ENCODE measurements at regions of chr19 and their contacts with region 1.

Region 1: GRCh38 chr19:18612772-18613588 is at the start of gene TMEM59L:
- DNase-seq: peak; percentile 56
- H3K4me3 Mint-ChIP-seq: peak within 1 kb of the TSS; percentile 61
- H3K27ac Mint-ChIP-seq: no peak within 1 kb of the TSS
- H3K4me1 Mint-ChIP-seq: peaks cover 17% of the 10 kb centered on the region
- H3K27me3 Mint-ChIP-seq: peaks cover 62% of the 10 kb centered on the region
- total RNA-seq, gene TMEM59L: 0.21 to 0.40 TPM

Region 2: GRCh38 chr19:18785179-18786128 is 172.5 kb after region 1 on chr19:
- CTCF ChIA-PET with region 1: no interaction called
- intact Hi-C with region 1: loop called (anchors 10 kb)
- DNase-seq: peak; percentile 79
- H3K4me3 Mint-ChIP-seq: no peak overlapping the region
- H3K27ac Mint-ChIP-seq: no peak overlapping the region
- H3K4me1 Mint-ChIP-seq: peaks cover 35% of the 10 kb centered on the region
- H3K27me3 Mint-ChIP-seq: peaks cover 51% of the 10 kb centered on the region